ENCODE measurements at regions of chr17 and their contacts with region 1.

Region 1: DNA sequence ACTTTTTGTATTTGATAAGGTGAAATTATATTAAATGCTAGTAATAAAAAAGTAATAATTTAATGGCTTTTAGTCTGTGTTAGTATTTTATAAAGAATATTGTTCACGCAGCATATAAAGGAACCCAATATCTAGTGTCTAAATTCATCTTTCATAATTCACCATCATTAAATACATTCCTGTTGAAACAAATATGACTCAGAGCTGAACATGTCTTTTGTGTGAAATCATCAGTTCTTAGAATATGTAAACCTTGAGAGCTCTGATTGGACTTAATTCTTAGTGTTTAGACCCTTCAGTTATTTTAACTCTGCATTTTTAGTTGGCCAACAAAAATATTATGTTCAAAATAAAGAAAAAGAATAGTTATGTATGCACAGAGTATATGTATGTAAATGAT is 71.8 kb downstream of the ABHD15 start:
- DNase-seq: no peak
- ATAC-seq: no peak
- H3K4me3 ChIP-seq: no peak overlapping the region
- H3K4me3 Mint-ChIP-seq: no peak overlapping the region
- H3K27ac ChIP-seq: no peak overlapping the region
- H3K27ac Mint-ChIP-seq: no peak overlapping the region
- H3K4me1 ChIP-seq: no peaks in the 10 kb centered on the region
- H3K4me1 Mint-ChIP-seq: no peaks in the 10 kb centered on the region
- H3K27me3 ChIP-seq: no peaks in the 10 kb centered on the region
- H3K27me3 Mint-ChIP-seq: no peaks in the 10 kb centered on the region
- CTCF ChIP-seq: no peak

Region 2: GRCh38 chr17:29461483-29462206 is 33.4 kb before region 1 on chr17:
- CTCF ChIA-PET with region 1: no interaction called
- POLR2A ChIA-PET with region 1: no interaction called
- intact Hi-C with region 1: loop called in 1 of 2 experiments (anchors 1 kb)
- DNase-seq: no peak
- ATAC-seq: no peak
- H3K4me3 ChIP-seq: no peak overlapping the region
- H3K4me3 Mint-ChIP-seq: no peak overlapping the region
- H3K27ac ChIP-seq: no peak overlapping the region
- H3K27ac Mint-ChIP-seq: peak overlapping the region; percentile 55
- H3K4me1 ChIP-seq: no peaks in the 10 kb centered on the region
- H3K4me1 Mint-ChIP-seq: peaks cover 26% of the 10 kb centered on the region
- H3K27me3 ChIP-seq: no peaks in the 10 kb centered on the region
- H3K27me3 Mint-ChIP-seq: no peaks in the 10 kb centered on the region
- CTCF ChIP-seq: no peak